ENCODE measurements at regions of chr17 and their contacts with region 1.

Region 1: GRCh38 chr17:14300575-14301278 is at the start of gene HS3ST3B1:
- DNase-seq: peak; percentile 81
- ATAC-seq: peak; percentile 84
- H3K4me3 Mint-ChIP-seq: peak within 1 kb of the TSS; percentile 87
- H3K27ac Mint-ChIP-seq: peak within 1 kb of the TSS; percentile 86
- H3K4me1 Mint-ChIP-seq: peaks cover 58% of the 10 kb centered on the region
- H3K27me3 Mint-ChIP-seq: peaks cover 50% of the 10 kb centered on the region
- CTCF ChIP-seq: no peak
- total RNA-seq, gene HS3ST3B1: 3.1 and 3.3 TPM in 2 replicates

Region 2: GRCh38 chr17:13337864-13338371 is 962.8 kb before region 1 on chr17:
- CTCF ChIA-PET with region 1: no interaction called
- POLR2A ChIA-PET with region 1: no interaction called
- intact Hi-C with region 1: loop called (anchors 5 kb)
- DNase-seq: no peak
- ATAC-seq: no peak
- H3K4me3 Mint-ChIP-seq: no peak overlapping the region
- H3K27ac Mint-ChIP-seq: no peak overlapping the region
- H3K4me1 Mint-ChIP-seq: no peaks in the 10 kb centered on the region
- H3K27me3 Mint-ChIP-seq: no peaks in the 10 kb centered on the region
- CTCF ChIP-seq: no peak

Region 3: GRCh38 chr17:14069251-14070021 is 231.3 kb before region 1 on chr17 and contains the start of gene COX10:
- CTCF ChIA-PET with region 1: no interaction called
- POLR2A ChIA-PET with region 1: interaction called, 6 read pairs
- intact Hi-C with region 1: loop called (anchors 1 kb)
- DNase-seq: peak; percentile 87
- ATAC-seq: peak; percentile 98
- H3K4me3 Mint-ChIP-seq: peak within 1 kb of the TSS; percentile 97
- H3K27ac Mint-ChIP-seq: peak within 1 kb of the TSS; percentile 90
- H3K4me1 Mint-ChIP-seq: peaks cover 33% of the 10 kb centered on the region
- H3K27me3 Mint-ChIP-seq: no peaks in the 10 kb centered on the region
- CTCF ChIP-seq: no peak
- total RNA-seq, gene COX10: 19.4 and 20.8 TPM in 2 replicates

Region 4: GRCh38 chr17:14282726-14283125 is 18.0 kb before region 1 on chr17:
- CTCF ChIA-PET with region 1: no interaction called
- POLR2A ChIA-PET with region 1: no interaction called
- intact Hi-C with region 1: no loop called
- DNase-seq: no peak
- ATAC-seq: no peak
- H3K4me3 Mint-ChIP-seq: no peak overlapping the region
- H3K27ac Mint-ChIP-seq: no peak overlapping the region
- H3K4me1 Mint-ChIP-seq: no peaks in the 10 kb centered on the region
- H3K27me3 Mint-ChIP-seq: peaks cover 41% of the 10 kb centered on the region
- CTCF ChIP-seq: no peak

Region 5: DNA sequence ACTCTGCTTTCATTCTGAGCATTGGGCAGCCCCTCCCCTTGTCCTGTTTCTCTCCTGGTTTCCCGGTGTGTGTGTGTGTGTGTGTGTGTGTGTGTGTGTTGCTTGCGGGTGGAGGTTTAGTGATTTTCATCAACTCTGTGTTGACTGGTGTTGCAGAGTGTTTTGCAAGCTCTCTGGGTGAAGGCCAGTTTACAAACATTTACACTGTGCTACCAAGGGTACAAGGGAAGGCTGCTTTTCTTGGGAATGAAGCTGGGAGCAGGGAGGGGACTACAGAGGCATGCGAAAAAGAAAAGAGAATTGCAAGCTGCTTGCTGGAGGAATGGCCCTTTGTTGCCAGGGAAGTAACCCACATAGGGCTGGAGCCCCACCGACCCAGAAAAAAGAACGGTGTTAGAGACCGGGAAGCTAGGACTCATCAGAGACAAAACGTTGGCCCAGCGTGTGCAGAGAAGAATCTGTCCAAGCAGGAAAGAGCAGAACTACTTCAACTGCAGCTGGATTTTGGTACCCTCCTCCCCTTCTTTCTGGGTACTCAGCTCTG is 29.8 kb after region 1 on chr17:
- CTCF ChIA-PET with region 1: no interaction called
- POLR2A ChIA-PET with region 1: no interaction called
- intact Hi-C with region 1: no loop called
- DNase-seq: no peak
- ATAC-seq: no peak
- H3K4me3 Mint-ChIP-seq: no peak overlapping the region
- H3K27ac Mint-ChIP-seq: no peak overlapping the region
- H3K4me1 Mint-ChIP-seq: peaks cover 4% of the 10 kb centered on the region
- H3K27me3 Mint-ChIP-seq: no peaks in the 10 kb centered on the region
- CTCF ChIP-seq: no peak

Region 6: GRCh38 chr17:14351493-14351892 is 50.8 kb after region 1 on chr17:
- CTCF ChIA-PET with region 1: interaction called, 14 read pairs
- POLR2A ChIA-PET with region 1: interaction called, 28 read pairs
- intact Hi-C with region 1: loop called (anchors 1 kb)
- DNase-seq: no peak
- ATAC-seq: peak; percentile 97
- H3K4me3 Mint-ChIP-seq: peak overlapping the region; percentile 32
- H3K27ac Mint-ChIP-seq: peak overlapping the region; percentile 63
- H3K4me1 Mint-ChIP-seq: peaks cover 41% of the 10 kb centered on the region
- H3K27me3 Mint-ChIP-seq: peaks cover 21% of the 10 kb centered on the region
- CTCF ChIP-seq: no peak

Region 7: DNA sequence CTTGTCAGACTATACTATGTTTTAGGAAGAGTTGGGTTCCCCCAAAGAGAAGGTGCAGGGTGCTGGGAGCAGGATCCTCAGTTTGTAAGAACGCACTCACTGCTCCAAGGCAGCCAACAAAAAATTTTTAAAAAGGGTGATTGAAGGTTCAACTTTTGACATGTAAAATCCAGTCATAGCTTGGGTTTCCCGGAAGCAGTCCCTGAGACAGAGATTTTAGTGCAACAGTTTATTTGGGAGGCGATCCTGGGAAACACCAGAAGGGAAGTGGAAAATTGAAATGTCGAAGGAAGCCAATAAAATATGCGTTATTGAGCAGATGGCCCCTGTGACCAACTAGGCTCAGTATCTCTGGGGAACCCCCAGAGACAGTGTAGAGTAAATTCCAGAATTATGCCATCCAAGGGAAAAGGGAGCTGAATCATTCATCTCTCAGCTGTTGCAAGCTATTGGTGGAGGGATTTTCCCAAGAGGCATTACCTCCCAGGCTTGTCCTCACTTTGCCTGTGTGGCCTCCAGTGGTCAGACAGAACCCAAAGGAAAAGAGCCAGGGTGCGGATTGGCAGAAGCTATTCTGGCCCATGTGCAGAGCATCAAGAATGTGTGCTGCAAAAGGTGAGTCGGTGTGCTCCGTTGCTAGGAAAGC is 73.0 kb after region 1 on chr17:
- CTCF ChIA-PET with region 1: no interaction called
- POLR2A ChIA-PET with region 1: no interaction called
- intact Hi-C with region 1: no loop called
- DNase-seq: no peak
- ATAC-seq: no peak
- H3K4me3 Mint-ChIP-seq: no peak overlapping the region
- H3K27ac Mint-ChIP-seq: no peak overlapping the region
- H3K4me1 Mint-ChIP-seq: no peaks in the 10 kb centered on the region
- H3K27me3 Mint-ChIP-seq: peaks cover 10% of the 10 kb centered on the region
- CTCF ChIP-seq: no peak

Region 8: DNA sequence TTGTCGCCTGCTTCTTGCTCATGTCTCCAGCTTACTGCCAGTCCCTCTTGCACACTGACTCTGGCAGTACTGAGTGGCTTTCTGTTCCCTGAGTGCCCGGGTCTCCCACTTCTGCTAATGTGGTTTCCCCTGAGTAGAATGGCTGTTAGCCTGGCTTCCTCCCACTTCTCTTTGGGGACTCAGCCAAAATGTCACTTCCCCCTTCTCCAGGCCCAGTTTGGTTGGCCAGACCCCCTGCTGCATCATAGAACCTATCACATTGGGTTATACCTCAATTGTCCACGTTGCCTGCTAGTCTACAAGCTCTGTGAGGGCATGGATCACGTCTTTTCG is 304.5 kb after region 1 on chr17:
- CTCF ChIA-PET with region 1: no interaction called
- POLR2A ChIA-PET with region 1: interaction called, 6 read pairs
- intact Hi-C with region 1: loop called (anchors 5 kb)
- DNase-seq: no peak
- ATAC-seq: peak; percentile 91
- H3K4me3 Mint-ChIP-seq: peak overlapping the region; percentile 53
- H3K27ac Mint-ChIP-seq: peak overlapping the region; percentile 74
- H3K4me1 Mint-ChIP-seq: peaks cover 20% of the 10 kb centered on the region
- H3K27me3 Mint-ChIP-seq: no peaks in the 10 kb centered on the region
- CTCF ChIP-seq: no peak